Sciatic nerve (tissue), 2 donors: ENCODE measurements at regions of chr10 and their contacts with region 1.

Region 1: DNA sequence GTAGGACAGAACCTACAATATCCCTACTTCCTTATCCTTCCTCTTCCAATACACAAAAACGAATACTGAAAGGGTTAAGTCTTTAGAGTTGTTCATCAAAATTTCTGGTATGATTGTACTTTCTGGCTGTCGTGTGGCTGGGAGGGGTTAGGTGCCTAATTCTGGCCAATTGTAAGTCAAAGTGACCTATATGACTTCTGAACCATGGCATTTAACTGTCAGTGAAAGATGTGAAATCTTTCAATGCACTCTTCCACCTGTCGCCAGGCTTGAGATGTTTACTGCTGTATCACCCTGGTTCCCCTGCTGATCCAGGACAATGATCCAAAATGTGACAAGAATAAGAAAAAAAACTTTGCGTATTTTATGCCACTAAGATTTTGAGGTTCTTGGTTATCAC is 20.8 kb downstream of the EPC1 start:
- DNase-seq: no peak
- ATAC-seq: no peak

Region 2: GRCh38 chr10:32943854-32944661 is 617.9 kb after region 1 on chr10:
- intact Hi-C with region 1: loop called (anchors 10 kb)
- DNase-seq: no peak
- ATAC-seq: peak; percentile 34